Endothelial cell of umbilical vein (primary cell): ENCODE measurements at regions of chr20 and their contacts with region 1.

Region 1: DNA sequence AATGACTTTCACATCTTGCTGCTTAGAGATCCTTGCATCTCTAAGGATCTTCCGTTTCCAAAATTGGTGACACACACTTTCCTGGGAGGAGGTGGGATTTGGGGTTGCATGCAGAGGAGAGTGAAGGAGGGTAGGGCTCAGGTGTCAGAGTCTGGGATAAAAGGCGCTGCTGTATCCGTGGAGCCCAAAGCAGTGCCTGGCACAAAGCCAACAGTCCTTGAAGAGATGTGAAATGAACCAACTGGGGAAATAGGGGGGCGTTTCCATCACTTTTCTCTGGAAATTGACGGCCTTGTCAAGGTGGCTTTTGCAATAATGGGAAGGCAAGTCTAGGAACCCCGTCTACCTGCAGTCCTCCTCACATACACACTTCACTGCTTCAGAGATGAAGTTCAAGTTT is 59.5 kb upstream of the NELFCD start:
- DNase-seq: no peak
- H3K4me3 ChIP-seq: no peak overlapping the region
- H3K27ac ChIP-seq: no peak overlapping the region
- H3K4me1 ChIP-seq: no peaks in the 10 kb centered on the region
- H3K27me3 ChIP-seq: peaks cover 3% of the 10 kb centered on the region in 2 experiments
- CTCF ChIP-seq: no peak
- POLR2A ChIP-seq: no peak

Region 2: DNA sequence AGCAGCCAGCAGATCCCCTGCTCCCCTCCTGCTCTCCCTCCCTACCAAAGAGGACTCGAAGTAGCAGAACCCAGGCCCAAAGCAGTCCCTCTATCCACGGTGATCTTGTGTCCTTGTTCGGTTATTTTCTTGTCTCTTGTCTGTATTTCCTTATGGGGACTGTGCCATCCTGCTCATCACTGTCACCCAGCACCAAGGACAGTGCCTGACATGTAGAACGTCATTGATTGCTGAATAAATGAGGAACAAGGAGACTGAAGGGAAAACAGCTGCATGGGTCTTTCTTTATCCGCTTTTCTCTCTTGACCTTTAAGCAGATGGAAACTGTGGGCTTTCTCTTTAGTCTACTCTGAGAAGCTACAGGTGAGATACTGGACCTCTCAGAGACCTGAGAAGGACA is 212.6 kb after region 1 on chr20:
- CTCF ChIA-PET with region 1: no interaction called
- POLR2A ChIA-PET with region 1: no interaction called
- dilution Hi-C with region 1: no loop called
- intact Hi-C with region 1: no loop called
- DNase-seq: no peak
- H3K4me3 ChIP-seq: no peak overlapping the region
- H3K27ac ChIP-seq: no peak overlapping the region
- H3K4me1 ChIP-seq: no peaks in the 10 kb centered on the region
- H3K27me3 ChIP-seq: no peaks in the 10 kb centered on the region
- CTCF ChIP-seq: no peak
- POLR2A ChIP-seq: no peak

Region 3: DNA sequence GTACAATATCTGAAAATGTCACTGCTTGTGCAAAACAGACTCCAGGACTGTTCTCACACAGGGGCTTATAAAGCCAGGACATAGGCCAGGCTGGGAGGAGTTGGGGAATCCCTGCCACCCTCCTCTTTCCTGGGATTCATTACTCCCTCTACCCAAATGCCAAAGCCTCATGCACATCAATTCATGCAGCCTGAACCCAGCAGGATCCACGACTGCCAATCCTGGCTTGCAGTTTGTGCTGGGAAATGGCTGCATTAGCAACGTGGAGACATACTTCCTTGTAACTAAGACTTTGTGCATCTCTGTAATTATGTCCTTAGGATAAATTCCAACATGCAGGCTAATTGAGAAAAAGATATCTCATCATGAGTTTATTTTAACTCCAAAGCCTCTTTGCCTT is 868.1 kb after region 1 on chr20:
- CTCF ChIA-PET with region 1: no interaction called
- POLR2A ChIA-PET with region 1: no interaction called
- dilution Hi-C with region 1: no loop called
- intact Hi-C with region 1: loop called (anchors 5 kb)
- DNase-seq: no peak
- H3K4me3 ChIP-seq: no peak overlapping the region
- H3K27ac ChIP-seq: no peak overlapping the region
- H3K4me1 ChIP-seq: no peaks in the 10 kb centered on the region
- H3K27me3 ChIP-seq: no peaks in the 10 kb centered on the region
- CTCF ChIP-seq: no peak
- POLR2A ChIP-seq: no peak